H1 (cell line): ENCODE measurements at regions of chr5 and their contacts with region 1.

Region 1: DNA sequence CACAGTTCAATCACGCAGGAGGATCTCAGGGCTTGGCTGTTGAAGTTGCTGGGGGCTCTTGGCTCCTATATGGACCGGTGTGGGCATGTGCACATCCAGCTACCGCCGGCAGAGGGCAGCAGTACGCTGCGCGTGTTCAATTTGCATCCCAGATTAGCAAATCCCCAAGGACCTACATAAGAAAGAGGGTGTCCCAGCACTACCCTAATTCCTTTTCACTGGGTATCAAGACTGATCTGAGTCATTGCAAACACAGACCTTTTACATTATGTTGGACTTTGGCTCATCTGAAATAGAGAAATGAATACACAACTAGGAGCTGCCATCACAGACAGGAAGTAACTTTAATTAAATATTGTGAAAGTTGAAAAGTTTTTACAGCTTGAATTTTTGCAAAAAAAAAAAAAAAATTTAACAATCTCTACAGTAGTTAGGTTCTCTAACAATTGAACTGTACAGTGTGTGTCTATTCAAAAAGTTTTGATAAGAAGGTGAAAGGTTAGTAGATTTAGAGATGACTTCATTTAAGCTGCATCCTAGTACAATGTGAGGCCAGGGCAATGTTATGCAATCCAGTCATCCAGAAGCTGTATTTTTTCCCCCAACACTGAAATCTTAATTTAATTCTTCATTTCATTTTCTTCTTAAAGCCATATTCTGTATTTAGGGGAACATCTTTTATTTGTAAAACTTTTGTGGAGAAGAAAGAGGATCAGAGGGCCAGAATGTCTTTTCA is 404.0 kb downstream of the EBF1 start:
- DNase-seq: peak; percentile 86 to 92
- H3K4me3 ChIP-seq: no peak overlapping the region
- H3K27ac ChIP-seq: no peak overlapping the region
- H3K4me1 ChIP-seq: peaks cover 2 to 18% (median 11%) of the 10 kb centered on the region in 4 experiments; a peak in 5 of 7 replicates
- H3K27me3 ChIP-seq: no peaks in the 10 kb centered on the region; a peak in 1 of 7 replicates
- CTCF ChIP-seq: peak; percentile 90 to 93 (median 93)
- EP300 ChIP-seq: no peak
- POLR2A ChIP-seq: no peak
- RAD21 ChIP-seq: peak; percentile 98 to 100

Region 2: GRCh38 chr5:158174918-158175851 is 520.6 kb before region 1 on chr5:
- CTCF ChIA-PET with region 1: interaction called, 29 read pairs
- POLR2A ChIA-PET with region 1: no interaction called
- DNase-seq: peak; percentile 73 to 90
- H3K4me3 ChIP-seq: no peak overlapping the region
- H3K27ac ChIP-seq: no peak overlapping the region
- H3K4me1 ChIP-seq: peaks cover 0 to 6% (median 4%) of the 10 kb centered on the region in 4 experiments; a peak in 4 of 7 replicates
- H3K27me3 ChIP-seq: no peaks in the 10 kb centered on the region
- CTCF ChIP-seq: peak; percentile 72 to 88 (median 85)
- EP300 ChIP-seq: no peak
- POLR2A ChIP-seq: no peak
- RAD21 ChIP-seq: peak; percentile 99

Region 3: GRCh38 chr5:158682631-158683030 is 13.1 kb before region 1 on chr5:
- CTCF ChIA-PET with region 1: interaction called, 16 read pairs
- POLR2A ChIA-PET with region 1: no interaction called
- DNase-seq: no peak
- H3K4me3 ChIP-seq: no peak overlapping the region
- H3K27ac ChIP-seq: no peak overlapping the region
- H3K4me1 ChIP-seq: no peaks in the 10 kb centered on the region; a peak in 1 of 7 replicates
- H3K27me3 ChIP-seq: no peaks in the 10 kb centered on the region
- CTCF ChIP-seq: no peak
- EP300 ChIP-seq: no peak
- POLR2A ChIP-seq: no peak
- RAD21 ChIP-seq: no peak

Region 4: DNA sequence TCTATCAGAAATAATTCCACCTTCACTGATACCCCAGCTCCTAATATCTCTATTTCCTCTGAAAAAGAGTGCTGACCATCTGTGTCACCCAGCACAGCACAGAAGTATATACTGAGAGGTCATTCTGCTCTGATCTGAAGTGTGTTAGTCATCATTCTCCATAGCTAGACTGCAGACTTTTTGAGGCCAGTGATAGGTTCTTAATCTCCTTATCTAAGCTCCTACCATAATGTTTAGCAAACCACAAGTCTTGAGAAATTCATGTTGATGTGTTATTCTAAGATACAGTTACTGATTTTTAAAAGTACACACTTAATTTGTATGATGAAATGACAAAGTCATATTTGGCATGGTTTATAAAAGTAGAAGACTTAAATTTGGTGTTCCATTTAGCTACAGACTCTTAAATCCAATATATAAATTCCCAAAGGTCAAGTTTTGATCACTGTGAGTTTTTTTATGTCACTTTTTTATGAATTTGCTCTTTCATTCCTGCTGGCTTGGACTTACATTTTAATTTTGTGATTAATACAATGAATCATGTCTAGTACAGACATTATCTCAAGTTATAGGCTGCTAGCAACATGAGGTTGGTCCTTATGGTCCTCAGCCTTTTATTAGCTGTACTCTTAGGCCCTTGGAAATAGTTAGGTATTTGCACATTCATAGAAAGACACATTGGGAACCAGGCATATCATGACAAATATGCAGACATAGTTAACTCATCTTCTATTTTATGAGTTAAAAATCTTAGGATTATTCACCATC is 23.2 kb after region 1 on chr5:
- CTCF ChIA-PET with region 1: interaction called, 15 read pairs
- POLR2A ChIA-PET with region 1: no interaction called
- DNase-seq: no peak
- H3K4me3 ChIP-seq: no peak overlapping the region
- H3K27ac ChIP-seq: no peak overlapping the region
- H3K4me1 ChIP-seq: peaks cover 0 to 4% (median 2%) of the 10 kb centered on the region in 4 experiments; a peak in 2 of 7 replicates
- H3K27me3 ChIP-seq: peaks cover 0 to 7% (median 0%) of the 10 kb centered on the region in 4 experiments; a peak in 1 of 7 replicates
- CTCF ChIP-seq: no peak
- EP300 ChIP-seq: no peak
- POLR2A ChIP-seq: no peak
- RAD21 ChIP-seq: no peak

Region 5: GRCh38 chr5:158758675-158759074 is 62.9 kb after region 1 on chr5:
- CTCF ChIA-PET with region 1: interaction called, 21 read pairs
- POLR2A ChIA-PET with region 1: no interaction called
- DNase-seq: no peak
- H3K4me3 ChIP-seq: no peak overlapping the region
- H3K27ac ChIP-seq: no peak overlapping the region
- H3K4me1 ChIP-seq: no peaks in the 10 kb centered on the region
- H3K27me3 ChIP-seq: no peaks in the 10 kb centered on the region
- CTCF ChIP-seq: no peak
- EP300 ChIP-seq: no peak
- POLR2A ChIP-seq: no peak
- RAD21 ChIP-seq: no peak

Region 6: DNA sequence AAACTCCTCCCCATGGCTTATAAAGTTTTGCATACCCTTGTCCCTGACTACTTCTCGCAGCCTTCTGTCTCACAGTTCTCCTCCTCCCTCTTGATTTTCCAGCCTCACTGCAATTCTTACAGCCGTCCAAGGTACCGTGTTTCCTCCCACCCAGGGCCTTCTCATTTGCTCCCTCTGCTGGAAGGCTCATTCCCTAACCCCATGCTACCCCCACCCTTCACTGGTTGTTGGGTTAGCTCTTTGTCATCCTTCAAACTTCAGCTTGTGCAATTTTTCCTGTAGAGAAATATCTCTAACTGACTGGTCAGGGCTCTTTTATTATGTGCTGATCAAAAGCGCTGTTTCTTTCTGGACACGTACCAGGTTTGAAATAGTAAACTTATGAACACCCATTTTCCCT is 74.7 kb after region 1 on chr5:
- CTCF ChIA-PET with region 1: interaction called, 27 read pairs
- POLR2A ChIA-PET with region 1: no interaction called
- DNase-seq: peak; percentile 7 to 48
- H3K4me3 ChIP-seq: no peak overlapping the region
- H3K27ac ChIP-seq: no peak overlapping the region
- H3K4me1 ChIP-seq: no peaks in the 10 kb centered on the region; a peak in 1 of 7 replicates
- H3K27me3 ChIP-seq: no peaks in the 10 kb centered on the region
- CTCF ChIP-seq: peak; percentile 68 to 82 (median 72)
- EP300 ChIP-seq: no peak
- POLR2A ChIP-seq: no peak
- RAD21 ChIP-seq: peak; percentile 76 to 77

Region 7: GRCh38 chr5:159106569-159107282 is 411.0 kb after region 1 on chr5:
- CTCF ChIA-PET with region 1: interaction called, 43 read pairs
- POLR2A ChIA-PET with region 1: no interaction called
- DNase-seq: peak in 1 of 2 experiments; percentile 91
- H3K4me3 ChIP-seq: peak overlapping the region in 2 of 4 experiments; percentile 16 to 57; a peak in 5 of 8 replicates
- H3K27ac ChIP-seq: no peak overlapping the region
- H3K4me1 ChIP-seq: peaks cover 8 to 19% (median 13%) of the 10 kb centered on the region in 4 experiments; a peak in 6 of 7 replicates
- H3K27me3 ChIP-seq: peaks cover 48 to 53% (median 52%) of the 10 kb centered on the region in 4 experiments
- CTCF ChIP-seq: peak; percentile 88 to 93 (median 90)
- EP300 ChIP-seq: no peak
- POLR2A ChIP-seq: no peak
- RAD21 ChIP-seq: peak; percentile 95 to 98